Breast epithelium (tissue), 4 donors: ENCODE measurements at regions of chr5 and their contacts with region 1.

Region 1: DNA sequence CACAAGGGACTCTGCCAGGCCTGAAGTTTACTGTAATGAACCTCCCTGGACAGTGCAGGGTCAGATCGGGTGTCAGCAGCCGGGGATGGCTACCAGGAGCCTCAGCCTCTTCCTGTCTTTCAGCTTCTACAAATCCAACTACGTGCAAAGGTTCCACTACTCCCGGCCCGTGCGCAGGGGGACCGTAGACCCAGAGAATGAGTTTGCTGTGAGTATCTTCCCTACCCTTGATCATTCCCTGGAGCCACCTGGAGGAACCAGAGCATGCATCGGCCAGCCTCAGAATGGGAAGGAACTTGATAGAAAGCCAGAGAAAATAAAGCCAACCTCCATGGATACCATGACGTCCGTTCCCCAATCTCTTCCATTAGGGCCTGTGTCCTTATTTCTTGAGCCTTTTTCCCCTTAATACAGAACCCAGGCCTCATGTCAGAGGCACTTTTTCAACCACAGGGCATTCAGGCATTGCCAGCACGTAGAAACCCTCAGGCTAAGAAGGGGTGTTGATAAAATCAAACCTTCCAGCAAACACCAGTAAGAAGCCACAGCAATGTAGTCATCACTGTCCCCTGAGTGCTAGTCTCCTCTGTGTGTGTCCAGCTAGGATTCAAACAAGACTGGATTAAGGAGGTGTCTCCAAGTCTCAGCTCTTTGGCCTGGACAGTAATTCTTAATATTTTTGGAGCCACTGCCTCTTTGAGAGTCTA is 49.0 kb upstream of the FOXI1 start:
- DNase-seq: no peak
- H3K4me3 ChIP-seq: no peak overlapping the region
- H3K27ac ChIP-seq: no peak overlapping the region
- H3K4me1 ChIP-seq: no peaks in the 10 kb centered on the region
- H3K27me3 ChIP-seq: no peaks in the 10 kb centered on the region
- CTCF ChIP-seq: no peak
- POLR2A ChIP-seq: no peak

Region 2: GRCh38 chr5:169991115-169991869 is 65.4 kb before region 1 on chr5:
- intact Hi-C with region 1: loop called (anchors 2 kb)
- DNase-seq: no peak
- H3K4me3 ChIP-seq: no peak overlapping the region
- H3K27ac ChIP-seq: no peak overlapping the region
- H3K4me1 ChIP-seq: no peaks in the 10 kb centered on the region
- H3K27me3 ChIP-seq: no peaks in the 10 kb centered on the region
- CTCF ChIP-seq: no peak
- POLR2A ChIP-seq: no peak

Region 3: GRCh38 chr5:169997798-169998197 is 58.9 kb before region 1 on chr5:
- intact Hi-C with region 1: loop called (anchors 2 kb)
- DNase-seq: no peak
- H3K4me3 ChIP-seq: no peak overlapping the region
- H3K27ac ChIP-seq: no peak overlapping the region
- H3K4me1 ChIP-seq: no peaks in the 10 kb centered on the region
- H3K27me3 ChIP-seq: no peaks in the 10 kb centered on the region
- CTCF ChIP-seq: no peak
- POLR2A ChIP-seq: no peak

Region 4: DNA sequence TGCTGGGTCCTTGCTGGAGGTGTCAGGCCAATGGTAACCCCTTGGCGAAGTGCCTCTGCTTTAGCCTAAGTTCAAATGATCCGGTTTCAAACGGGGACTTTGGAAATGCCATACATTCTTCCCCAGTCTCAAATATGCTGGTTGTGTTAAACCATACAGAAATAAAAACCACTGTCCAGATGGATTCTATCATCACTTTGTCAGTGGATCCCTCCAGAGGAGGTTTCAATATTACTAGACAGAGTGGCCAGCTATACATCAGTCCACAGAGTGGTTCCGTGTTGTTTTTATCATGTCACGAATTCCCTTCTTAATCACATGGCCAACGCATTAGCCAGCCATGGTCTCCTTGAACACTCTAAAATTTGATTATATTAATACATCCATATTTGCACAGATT is 797.9 kb after region 1 on chr5:
- intact Hi-C with region 1: loop called (anchors 5 kb)
- DNase-seq: no peak
- H3K4me3 ChIP-seq: no peak overlapping the region
- H3K27ac ChIP-seq: no peak overlapping the region
- H3K4me1 ChIP-seq: no peaks in the 10 kb centered on the region
- H3K27me3 ChIP-seq: no peaks in the 10 kb centered on the region
- CTCF ChIP-seq: no peak
- POLR2A ChIP-seq: no peak